Caco-2 (cell line): ENCODE measurements at regions of chr1 and their contacts with region 1.

Region 1: GRCh38 chr1:167533851-167534300 is 15.5 kb upstream of the CD247 start:
- DNase-seq: peak; percentile 78 to 83
- H3K4me3 ChIP-seq: no peak overlapping the region
- H3K4me3 Mint-ChIP-seq: no peak overlapping the region
- H3K27ac Mint-ChIP-seq: no peak overlapping the region
- H3K4me1 ChIP-seq: peaks cover 24% of the 10 kb centered on the region
- H3K4me1 Mint-ChIP-seq: peaks cover 7% of the 10 kb centered on the region
- H3K27me3 ChIP-seq: no peaks in the 10 kb centered on the region
- H3K27me3 Mint-ChIP-seq: no peaks in the 10 kb centered on the region
- CTCF ChIP-seq: peak; percentile 85 to 86

Region 2: GRCh38 chr1:167066333-167067122 is 467.3 kb before region 1 on chr1:
- CTCF ChIA-PET with region 1: no interaction called
- POLR2A ChIA-PET with region 1: no interaction called
- intact Hi-C with region 1: loop called (anchors 1 kb)
- DNase-seq: peak; percentile 69 to 89
- H3K4me3 ChIP-seq: peak overlapping the region; percentile 0; the same call in 1 of the 2 replicates
- H3K4me3 Mint-ChIP-seq: peak overlapping the region; percentile 64
- H3K27ac Mint-ChIP-seq: no peak overlapping the region
- H3K4me1 ChIP-seq: no peaks in the 10 kb centered on the region
- H3K4me1 Mint-ChIP-seq: no peaks in the 10 kb centered on the region
- H3K27me3 ChIP-seq: no peaks in the 10 kb centered on the region
- H3K27me3 Mint-ChIP-seq: no peaks in the 10 kb centered on the region
- CTCF ChIP-seq: peak; percentile 92 to 95

Region 3: DNA sequence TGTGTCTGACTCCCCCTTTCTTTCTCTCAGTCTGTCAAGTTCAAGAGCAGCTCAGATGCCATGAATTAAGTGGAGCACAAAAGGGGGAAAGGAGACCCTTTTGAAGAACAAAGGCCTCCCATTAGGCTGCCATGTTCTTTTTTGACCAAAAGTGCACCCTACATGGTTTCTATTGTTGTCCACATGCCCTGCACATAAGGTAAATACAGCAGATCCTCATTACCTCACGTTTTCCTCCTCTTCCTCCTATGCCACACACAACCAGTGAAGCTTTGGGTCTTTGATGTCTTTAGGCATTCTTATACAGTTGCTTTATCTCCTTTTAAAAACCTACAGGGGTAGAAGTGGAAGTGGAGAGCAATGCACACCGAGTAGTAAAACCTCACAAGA is 265.5 kb before region 1 on chr1:
- CTCF ChIA-PET with region 1: interaction called, 3 read pairs
- POLR2A ChIA-PET with region 1: no interaction called
- intact Hi-C with region 1: loop called (anchors 2 kb)
- DNase-seq: no peak
- H3K4me3 ChIP-seq: no peak overlapping the region
- H3K4me3 Mint-ChIP-seq: no peak overlapping the region
- H3K27ac Mint-ChIP-seq: no peak overlapping the region
- H3K4me1 ChIP-seq: no peaks in the 10 kb centered on the region
- H3K4me1 Mint-ChIP-seq: peaks cover 7% of the 10 kb centered on the region
- H3K27me3 ChIP-seq: no peaks in the 10 kb centered on the region
- H3K27me3 Mint-ChIP-seq: no peaks in the 10 kb centered on the region
- CTCF ChIP-seq: no peak

Region 4: DNA sequence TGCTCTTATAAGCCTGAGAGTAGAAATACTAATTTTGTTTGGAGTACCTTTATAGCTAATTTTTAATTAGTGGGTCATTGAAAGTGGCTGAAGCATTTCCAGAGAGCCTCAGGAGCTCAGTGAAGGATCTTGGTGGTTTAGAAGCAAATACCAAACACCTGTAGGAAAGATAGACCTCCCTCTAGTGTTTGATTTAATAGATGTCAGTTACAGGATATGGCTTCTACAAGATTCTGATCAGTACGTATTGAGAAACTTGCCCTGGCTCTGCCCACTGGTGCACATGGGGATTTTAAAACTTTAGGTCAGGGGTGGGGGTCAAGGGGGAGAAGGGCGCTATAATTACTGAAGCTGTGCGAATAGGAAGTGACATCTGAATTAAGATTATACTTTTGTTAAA is 191.0 kb before region 1 on chr1:
- CTCF ChIA-PET with region 1: no interaction called
- POLR2A ChIA-PET with region 1: no interaction called
- intact Hi-C with region 1: loop called (anchors 5 kb)
- DNase-seq: no peak
- H3K4me3 ChIP-seq: no peak overlapping the region
- H3K4me3 Mint-ChIP-seq: no peak overlapping the region
- H3K27ac Mint-ChIP-seq: no peak overlapping the region
- H3K4me1 ChIP-seq: no peaks in the 10 kb centered on the region
- H3K4me1 Mint-ChIP-seq: peaks cover 12% of the 10 kb centered on the region
- H3K27me3 ChIP-seq: no peaks in the 10 kb centered on the region
- H3K27me3 Mint-ChIP-seq: no peaks in the 10 kb centered on the region
- CTCF ChIP-seq: peak; percentile 23 to 37

Region 5: DNA sequence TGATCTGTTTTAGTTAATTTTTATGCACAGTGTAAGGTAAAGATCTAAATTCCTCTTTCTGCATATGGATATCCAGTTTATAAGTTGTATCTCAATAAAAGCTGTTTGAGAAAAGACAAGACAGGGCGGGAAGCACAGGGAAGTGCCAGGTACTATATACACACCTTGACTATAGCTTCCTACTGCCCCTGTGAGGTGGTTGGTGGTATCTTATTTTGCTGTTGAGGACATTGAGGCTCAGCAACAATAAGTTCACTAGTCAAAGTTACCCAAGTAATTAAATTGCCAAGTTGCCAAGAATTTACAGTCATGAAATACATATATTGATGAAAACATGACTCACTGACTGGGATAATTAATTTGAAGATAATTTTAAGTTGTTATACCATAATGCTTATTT is 124.7 kb before region 1 on chr1:
- CTCF ChIA-PET with region 1: no interaction called
- POLR2A ChIA-PET with region 1: no interaction called
- intact Hi-C with region 1: loop called (anchors 2 kb)
- DNase-seq: peak in 1 of 2 experiments; percentile 35
- H3K4me3 ChIP-seq: no peak overlapping the region
- H3K4me3 Mint-ChIP-seq: no peak overlapping the region
- H3K27ac Mint-ChIP-seq: no peak overlapping the region
- H3K4me1 ChIP-seq: no peaks in the 10 kb centered on the region
- H3K4me1 Mint-ChIP-seq: no peaks in the 10 kb centered on the region
- H3K27me3 ChIP-seq: no peaks in the 10 kb centered on the region
- H3K27me3 Mint-ChIP-seq: no peaks in the 10 kb centered on the region
- CTCF ChIP-seq: peak in 1 of 2 experiments; percentile 29

Region 6: GRCh38 chr1:167442124-167442848 is 91.6 kb before region 1 on chr1:
- CTCF ChIA-PET with region 1: no interaction called
- POLR2A ChIA-PET with region 1: no interaction called
- intact Hi-C with region 1: loop called (anchors 1 kb)
- DNase-seq: peak; percentile 92 to 93
- H3K4me3 ChIP-seq: no peak overlapping the region
- H3K4me3 Mint-ChIP-seq: no peak overlapping the region
- H3K27ac Mint-ChIP-seq: no peak overlapping the region
- H3K4me1 ChIP-seq: no peaks in the 10 kb centered on the region
- H3K4me1 Mint-ChIP-seq: no peaks in the 10 kb centered on the region
- H3K27me3 ChIP-seq: no peaks in the 10 kb centered on the region
- H3K27me3 Mint-ChIP-seq: no peaks in the 10 kb centered on the region
- CTCF ChIP-seq: peak; percentile 90 to 94

Region 7: GRCh38 chr1:167553136-167554027 is 19.5 kb after region 1 on chr1 and contains the start of gene CREG1:
- CTCF ChIA-PET with region 1: interaction called, 8 read pairs
- POLR2A ChIA-PET with region 1: interaction called, 11 read pairs
- intact Hi-C with region 1: loop called (anchors 1 kb)
- DNase-seq: peak; percentile 95 to 98
- H3K4me3 ChIP-seq: peak within 1 kb of the TSS; percentile 65
- H3K4me3 Mint-ChIP-seq: peak within 1 kb of the TSS; percentile 82
- H3K27ac Mint-ChIP-seq: peak within 1 kb of the TSS; percentile 40
- H3K4me1 ChIP-seq: no peaks in the 10 kb centered on the region; the same call in 1 of the 2 replicates
- H3K4me1 Mint-ChIP-seq: no peaks in the 10 kb centered on the region
- H3K27me3 ChIP-seq: no peaks in the 10 kb centered on the region
- H3K27me3 Mint-ChIP-seq: no peaks in the 10 kb centered on the region
- CTCF ChIP-seq: no peak
- total RNA-seq, gene CREG1: 80.7 and 91.5 TPM in 2 replicates